ENCODE measurements at regions of chr19 and their contacts with region 1.

Region 1: DNA sequence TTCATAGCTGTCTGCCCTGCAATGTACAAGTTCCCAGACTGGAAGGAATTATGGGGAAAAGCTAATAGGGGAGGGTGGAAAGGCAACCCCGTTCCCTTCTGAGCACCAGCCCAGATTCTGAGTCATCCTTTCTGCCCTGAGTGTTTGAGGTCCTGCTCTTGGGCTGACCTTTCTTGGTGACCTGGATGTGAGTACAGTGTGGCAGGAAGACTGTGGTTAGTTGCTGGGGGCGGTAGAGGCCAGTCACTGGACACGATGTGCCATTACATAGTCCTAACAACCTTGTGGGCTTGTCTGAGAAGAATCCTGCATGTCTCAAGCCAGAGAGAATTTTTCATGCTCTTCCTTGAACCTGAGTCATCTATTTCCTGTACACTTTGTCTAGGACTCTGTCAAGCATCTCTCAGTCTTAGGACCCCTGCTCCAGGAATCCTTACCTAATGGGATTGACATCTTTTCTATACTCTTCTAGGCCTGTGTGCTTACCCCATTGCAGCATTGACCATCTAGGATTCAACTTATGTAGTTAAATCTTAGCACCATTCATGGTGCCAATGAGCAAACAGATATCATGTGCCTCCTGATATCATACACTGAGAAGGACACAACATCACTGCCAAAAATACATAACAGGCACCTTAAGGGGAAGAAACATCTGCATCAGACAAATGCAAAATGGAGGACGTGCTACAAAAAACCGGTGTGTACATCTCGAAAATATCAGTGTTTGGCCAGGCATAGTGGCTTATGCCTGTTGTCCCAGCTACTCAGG is 8.1 kb upstream of the ANGPTL4 start:
- DNase-seq: no peak

Region 2: GRCh38 chr19:8396563-8397203 is 40.9 kb after region 1 on chr19:
- intact Hi-C with region 1: loop called (anchors 2 kb)
- DNase-seq: no peak

Region 3: DNA sequence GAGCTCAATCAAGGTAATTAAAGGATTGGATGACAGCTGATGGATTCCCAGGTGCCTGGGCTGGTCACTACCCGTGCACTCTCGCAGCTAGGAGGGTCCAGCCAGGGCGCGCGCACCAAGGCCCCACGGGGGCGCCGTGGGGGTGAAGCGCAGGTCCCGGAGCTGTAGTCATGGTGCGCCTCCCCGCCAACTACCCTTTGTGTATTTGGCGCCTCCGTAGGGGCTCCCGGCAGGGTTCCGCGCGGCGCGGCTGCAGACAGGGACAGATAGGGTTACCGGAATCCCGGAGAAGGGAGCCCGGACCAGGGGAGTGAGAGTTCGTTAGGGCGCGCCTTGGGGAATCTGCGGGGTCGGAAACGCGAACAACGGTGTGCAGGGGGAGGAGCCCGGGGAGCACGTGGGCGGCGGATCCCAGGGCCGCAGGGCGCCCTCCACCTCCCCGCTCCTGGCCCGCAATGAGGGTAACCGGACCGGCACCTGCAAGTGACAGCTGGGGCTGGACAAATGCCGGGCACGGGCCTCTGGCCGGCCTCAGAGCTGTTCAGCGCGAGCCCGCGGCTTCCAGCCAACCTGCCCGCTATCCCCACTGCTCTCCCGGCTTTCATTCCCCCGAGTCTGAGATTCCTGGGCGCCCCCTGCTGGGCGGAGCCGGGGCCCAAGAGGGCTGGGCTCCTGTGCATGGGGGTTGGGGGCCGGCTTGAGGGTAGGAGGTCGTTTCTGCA is 150.0 kb after region 1 on chr19:
- intact Hi-C with region 1: loop called (anchors 1 kb)
- DNase-seq: peak; percentile 91

Region 4: GRCh38 chr19:8578642-8579265 is 222.9 kb after region 1 on chr19:
- intact Hi-C with region 1: loop called (anchors 5 kb)
- DNase-seq: peak; percentile 90

Measured in cardiac septum (tissue), 1 donor.